ENCODE measurements at regions of chr2 and their contacts with region 1.

Region 1: GRCh38 chr2:62663920-62664795 is 41.4 kb upstream of the EHBP1 start:
- DNase-seq: peak; percentile 43
- H3K4me3 ChIP-seq: no peak overlapping the region
- H3K27ac ChIP-seq: no peak overlapping the region
- H3K27me3 ChIP-seq: no peaks in the 10 kb centered on the region
- CTCF ChIP-seq: no peak

Region 2: GRCh38 chr2:62435720-62436119 is 228.4 kb before region 1 on chr2:
- CTCF ChIA-PET with region 1: no interaction called
- POLR2A ChIA-PET with region 1: no interaction called
- DNase-seq: no peak
- H3K4me3 ChIP-seq: no peak overlapping the region
- H3K27ac ChIP-seq: no peak overlapping the region
- H3K27me3 ChIP-seq: peaks cover 19% of the 10 kb centered on the region
- CTCF ChIP-seq: no peak

Region 3: DNA sequence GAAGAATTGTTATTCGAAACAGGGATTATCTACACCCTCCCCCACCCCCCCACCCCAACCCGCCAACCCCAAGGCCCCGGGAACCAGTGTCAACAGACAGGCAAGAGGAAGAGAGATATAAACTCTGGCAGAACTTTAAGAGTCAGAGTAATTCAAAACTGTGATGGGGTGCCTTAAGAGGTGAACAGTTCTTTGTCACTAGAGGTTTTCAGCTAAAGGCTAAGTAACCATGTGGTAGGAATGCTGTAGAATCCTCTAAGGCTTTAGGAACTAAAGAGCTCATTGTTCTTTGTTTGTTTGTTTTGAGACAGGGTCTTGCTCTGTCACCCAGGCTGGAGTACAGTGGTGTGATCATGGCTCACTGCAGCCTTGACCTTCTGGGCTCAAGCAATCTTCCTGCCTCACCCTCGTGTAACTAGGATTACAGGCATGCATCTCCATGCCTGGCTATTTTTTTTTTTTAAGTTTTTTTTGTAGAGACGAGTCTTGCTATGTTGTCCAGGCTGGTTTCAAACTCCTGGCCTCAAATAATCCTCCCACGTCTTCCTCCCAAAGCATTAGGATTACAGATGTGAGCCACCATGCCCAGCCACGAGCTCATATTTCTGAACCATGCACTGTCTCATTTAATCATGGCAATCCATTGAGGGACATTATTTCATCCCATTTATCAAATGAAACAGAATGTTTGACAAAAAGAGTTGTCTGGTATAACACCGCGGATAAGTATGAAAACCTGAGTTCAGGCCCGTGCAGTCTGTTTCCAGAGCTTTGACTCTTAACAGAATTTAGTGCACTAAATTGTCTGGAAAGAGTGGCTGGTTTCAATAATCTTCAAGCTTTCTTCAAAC is 137.4 kb before region 1 on chr2:
- CTCF ChIA-PET with region 1: no interaction called
- POLR2A ChIA-PET with region 1: interaction called, 10 read pairs
- DNase-seq: no peak
- H3K4me3 ChIP-seq: no peak overlapping the region
- H3K27ac ChIP-seq: no peak overlapping the region
- H3K27me3 ChIP-seq: no peaks in the 10 kb centered on the region
- CTCF ChIP-seq: no peak

Region 4: GRCh38 chr2:62596061-62596921 is 67.9 kb before region 1 on chr2:
- CTCF ChIA-PET with region 1: no interaction called
- POLR2A ChIA-PET with region 1: interaction called, 12 read pairs
- DNase-seq: peak; percentile 56
- H3K4me3 ChIP-seq: no peak overlapping the region
- H3K27ac ChIP-seq: no peak overlapping the region
- H3K27me3 ChIP-seq: no peaks in the 10 kb centered on the region
- CTCF ChIP-seq: no peak

Region 5: GRCh38 chr2:62705007-62705829 is 41.1 kb after region 1 on chr2 and contains the start of gene EHBP1:
- CTCF ChIA-PET with region 1: no interaction called
- POLR2A ChIA-PET with region 1: interaction called, 31 read pairs
- DNase-seq: peak; percentile 100
- H3K4me3 ChIP-seq: peak within 1 kb of the TSS; percentile 86
- H3K27ac ChIP-seq: peak within 1 kb of the TSS; percentile 69
- H3K27me3 ChIP-seq: no peaks in the 10 kb centered on the region
- CTCF ChIP-seq: no peak
- polyA plus RNA-seq, gene EHBP1: 48.2 and 68.6 TPM in 2 replicates

Region 6: DNA sequence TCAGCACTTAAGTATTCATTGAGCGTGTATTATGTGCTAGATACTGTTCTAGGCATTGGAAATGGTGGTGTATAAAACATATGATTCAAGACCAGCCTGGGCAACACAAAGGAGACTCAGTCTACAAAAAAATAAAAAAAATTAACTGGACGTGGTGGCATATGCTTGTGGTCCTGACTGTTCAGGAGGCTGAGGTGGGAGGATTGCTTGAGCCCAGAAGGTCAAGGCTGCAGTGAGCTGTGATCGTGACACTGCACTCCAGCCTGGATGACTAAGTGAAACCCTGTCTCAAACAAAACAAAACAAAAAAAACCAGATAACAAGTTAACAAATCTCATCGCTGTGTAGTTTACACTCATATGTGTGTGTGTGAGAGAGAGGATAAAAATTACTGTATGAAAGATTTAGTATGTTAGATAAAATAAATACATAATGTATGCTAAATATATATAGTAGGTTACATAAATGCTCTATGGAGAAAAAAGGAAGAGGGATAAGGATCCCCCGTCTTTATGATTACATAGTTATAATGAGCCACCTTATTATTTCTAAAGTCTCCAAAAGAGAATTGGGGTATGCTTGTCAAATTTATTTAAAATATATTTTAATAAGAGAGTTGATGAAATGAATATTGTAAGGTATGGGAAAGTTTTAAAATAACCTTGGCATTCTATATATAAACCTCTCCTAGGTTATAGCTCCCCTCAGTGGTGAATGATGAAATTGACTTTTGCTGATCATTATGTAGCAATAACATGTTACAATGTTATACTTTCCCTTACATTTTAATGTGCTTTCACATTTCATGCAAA is 110.6 kb after region 1 on chr2:
- CTCF ChIA-PET with region 1: no interaction called
- POLR2A ChIA-PET with region 1: interaction called, 10 read pairs
- DNase-seq: no peak
- H3K4me3 ChIP-seq: no peak overlapping the region
- H3K27ac ChIP-seq: no peak overlapping the region
- H3K27me3 ChIP-seq: no peaks in the 10 kb centered on the region
- CTCF ChIP-seq: peak; percentile 73

Measured in AG04450 (cell line).